ENCODE measurements at regions of chr7 and their contacts with region 1.

Region 1: DNA sequence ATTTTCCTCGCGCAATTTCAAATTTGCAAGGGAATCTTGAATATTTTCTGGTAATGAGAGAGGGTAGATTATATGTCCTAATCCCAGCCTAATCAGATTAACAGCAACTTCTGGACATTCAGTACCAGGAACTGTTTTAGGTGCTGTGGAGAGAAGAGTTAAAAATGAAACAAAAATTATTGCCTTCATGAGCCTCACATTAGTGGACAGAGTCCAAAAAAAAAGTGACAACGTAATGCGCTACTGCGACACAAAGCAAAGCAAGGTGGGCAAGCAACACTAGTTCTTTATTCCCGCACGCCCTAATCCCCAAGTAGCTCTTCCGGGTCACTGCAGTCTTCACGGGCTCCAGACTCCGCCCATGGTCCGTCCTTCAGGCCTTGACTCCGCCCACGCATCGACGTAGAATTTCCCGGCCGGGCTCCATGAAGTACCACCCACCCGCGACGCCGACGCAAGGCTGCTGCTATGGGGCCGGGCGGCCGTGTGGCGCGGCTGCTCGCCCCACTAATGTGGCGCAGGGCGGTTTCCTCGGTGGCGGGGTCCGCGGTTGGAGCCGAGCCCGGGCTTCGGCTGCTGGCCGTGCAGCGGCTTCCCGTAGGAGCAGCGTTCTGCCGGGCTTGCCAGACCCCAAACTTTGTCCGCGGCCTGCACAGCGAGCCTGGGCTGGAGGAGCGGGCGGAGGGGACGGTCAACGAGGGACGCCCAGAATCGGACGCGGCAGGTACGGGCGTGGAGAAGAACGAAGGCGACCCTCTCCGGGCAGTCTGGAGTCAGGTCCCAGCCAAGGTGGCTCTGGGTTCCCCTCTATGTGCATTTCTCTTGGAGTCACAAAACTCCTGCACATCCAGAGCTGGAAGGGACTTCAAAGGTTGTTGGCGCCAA is at the start of gene MALSU1:
- DNase-seq: peak; percentile 90 to 99 (median 96)
- ATAC-seq: peak; percentile 99
- H3K4me3 ChIP-seq: peak within 1 kb of the TSS; percentile 83 to 96
- H3K4me3 Mint-ChIP-seq: peak within 1 kb of the TSS; percentile 80
- H3K27ac ChIP-seq: peak within 1 kb of the TSS; percentile 72 to 80
- H3K27ac Mint-ChIP-seq: peak within 1 kb of the TSS; percentile 95
- H3K4me1 ChIP-seq: peaks cover 22% of the 10 kb centered on the region
- H3K4me1 Mint-ChIP-seq: peaks cover 45% of the 10 kb centered on the region
- H3K27me3 ChIP-seq: no peaks in the 10 kb centered on the region
- H3K27me3 Mint-ChIP-seq: no peaks in the 10 kb centered on the region
- CTCF ChIP-seq: no peak
- total RNA-seq, gene MALSU1: 56.0 to 56.6 TPM

Region 2: DNA sequence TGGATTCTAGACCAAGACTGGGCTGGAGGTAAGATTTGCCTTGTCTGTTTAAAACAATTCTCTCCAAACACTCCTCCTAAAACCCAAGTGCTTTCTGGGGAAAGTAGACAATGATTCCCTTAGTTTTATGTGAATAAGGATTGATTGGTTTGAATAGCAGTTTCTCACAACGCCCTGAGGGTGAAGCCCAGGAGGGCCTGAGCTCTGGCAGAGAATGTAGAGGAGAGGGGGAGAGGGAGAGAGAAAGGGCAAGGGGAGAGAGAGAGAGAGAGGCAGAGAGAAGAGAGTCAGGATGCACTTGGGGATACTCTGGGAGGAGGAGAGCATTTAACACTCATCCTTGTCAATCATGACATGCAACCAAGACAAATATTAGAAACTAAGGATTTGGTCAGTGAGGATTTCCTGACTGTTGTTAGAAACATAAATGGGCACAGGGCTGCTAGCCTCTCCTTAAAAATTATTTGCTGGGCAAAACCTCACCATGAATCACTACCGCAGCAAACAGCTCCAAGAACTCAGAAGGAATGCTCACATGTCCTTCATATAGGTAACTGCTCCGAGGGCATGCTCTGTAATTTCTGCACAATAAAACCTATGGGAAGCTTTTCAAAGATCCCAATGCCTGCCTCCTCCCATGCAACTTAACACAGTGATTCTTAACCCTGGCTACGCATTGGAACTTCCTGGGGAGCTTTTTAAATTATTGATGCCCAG is 887.0 kb before region 1 on chr7:
- CTCF ChIA-PET with region 1: no interaction called
- POLR2A ChIA-PET with region 1: no interaction called
- intact Hi-C with region 1: no loop called
- DNase-seq: no peak
- ATAC-seq: no peak
- H3K4me3 ChIP-seq: no peak overlapping the region
- H3K4me3 Mint-ChIP-seq: no peak overlapping the region
- H3K27ac ChIP-seq: no peak overlapping the region
- H3K27ac Mint-ChIP-seq: no peak overlapping the region
- H3K4me1 ChIP-seq: no peaks in the 10 kb centered on the region
- H3K4me1 Mint-ChIP-seq: no peaks in the 10 kb centered on the region
- H3K27me3 ChIP-seq: no peaks in the 10 kb centered on the region
- H3K27me3 Mint-ChIP-seq: no peaks in the 10 kb centered on the region
- CTCF ChIP-seq: no peak

Region 3: GRCh38 chr7:22854158-22855048 is 444.7 kb before region 1 on chr7:
- CTCF ChIA-PET with region 1: no interaction called
- POLR2A ChIA-PET with region 1: no interaction called
- intact Hi-C with region 1: loop called in 1 of 2 experiments (anchors 1 kb)
- DNase-seq: peak in 8 of 9 experiments; percentile 58 to 89 (median 76)
- ATAC-seq: peak; percentile 79
- H3K4me3 ChIP-seq: peak overlapping the region; percentile 82 to 94
- H3K4me3 Mint-ChIP-seq: peak overlapping the region; percentile 93
- H3K27ac ChIP-seq: peak overlapping the region; percentile 64 to 81
- H3K27ac Mint-ChIP-seq: peak overlapping the region; percentile 93
- H3K4me1 ChIP-seq: peaks cover 11% of the 10 kb centered on the region
- H3K4me1 Mint-ChIP-seq: peaks cover 23% of the 10 kb centered on the region
- H3K27me3 ChIP-seq: no peaks in the 10 kb centered on the region
- H3K27me3 Mint-ChIP-seq: no peaks in the 10 kb centered on the region
- CTCF ChIP-seq: peak; percentile 65

Region 4: GRCh38 chr7:23181684-23182553 is 117.2 kb before region 1 on chr7 and contains the start of gene NUP42:
- CTCF ChIA-PET with region 1: no interaction called
- POLR2A ChIA-PET with region 1: no interaction called
- intact Hi-C with region 1: loop called (anchors 1 kb)
- DNase-seq: peak; percentile 89 to 98 (median 95)
- ATAC-seq: peak; percentile 90
- H3K4me3 ChIP-seq: peak within 1 kb of the TSS; percentile 77 to 84
- H3K4me3 Mint-ChIP-seq: peak within 1 kb of the TSS; percentile 100
- H3K27ac ChIP-seq: peak within 1 kb of the TSS; percentile 86 to 91
- H3K27ac Mint-ChIP-seq: peak within 1 kb of the TSS; percentile 100
- H3K4me1 ChIP-seq: peaks cover 30% of the 10 kb centered on the region
- H3K4me1 Mint-ChIP-seq: peaks cover 39% of the 10 kb centered on the region
- H3K27me3 ChIP-seq: no peaks in the 10 kb centered on the region
- H3K27me3 Mint-ChIP-seq: no peaks in the 10 kb centered on the region
- CTCF ChIP-seq: no peak
- total RNA-seq, gene NUP42: 17.3 to 20.4 TPM

Region 5: GRCh38 chr7:23234569-23235296 is 64.4 kb before region 1 on chr7:
- CTCF ChIA-PET with region 1: no interaction called
- POLR2A ChIA-PET with region 1: no interaction called
- intact Hi-C with region 1: no loop called
- DNase-seq: peak in 1 of 9 experiments; percentile 12
- ATAC-seq: no peak
- H3K4me3 ChIP-seq: no peak overlapping the region
- H3K4me3 Mint-ChIP-seq: peak overlapping the region; percentile 19
- H3K27ac ChIP-seq: no peak overlapping the region
- H3K27ac Mint-ChIP-seq: no peak overlapping the region
- H3K4me1 ChIP-seq: no peaks in the 10 kb centered on the region
- H3K4me1 Mint-ChIP-seq: peaks cover 3% of the 10 kb centered on the region
- H3K27me3 ChIP-seq: no peaks in the 10 kb centered on the region
- H3K27me3 Mint-ChIP-seq: no peaks in the 10 kb centered on the region
- CTCF ChIP-seq: no peak

Region 6: GRCh38 chr7:23490357-23491135 is 191.4 kb after region 1 on chr7:
- CTCF ChIA-PET with region 1: no interaction called
- POLR2A ChIA-PET with region 1: interaction called, 5 read pairs
- intact Hi-C with region 1: loop called in 1 of 2 experiments (anchors 5 kb)
- DNase-seq: peak; percentile 32 to 81 (median 62)
- ATAC-seq: peak; percentile 93
- H3K4me3 ChIP-seq: peak overlapping the region; percentile 66 to 67
- H3K4me3 Mint-ChIP-seq: peak overlapping the region; percentile 80
- H3K27ac ChIP-seq: peak overlapping the region; percentile 35 to 70
- H3K27ac Mint-ChIP-seq: peak overlapping the region; percentile 82
- H3K4me1 ChIP-seq: peaks cover 12% of the 10 kb centered on the region
- H3K4me1 Mint-ChIP-seq: peaks cover 3% of the 10 kb centered on the region
- H3K27me3 ChIP-seq: no peaks in the 10 kb centered on the region
- H3K27me3 Mint-ChIP-seq: no peaks in the 10 kb centered on the region
- CTCF ChIP-seq: no peak

Region 7: GRCh38 chr7:23679898-23680413 is 380.8 kb after region 1 on chr7 and contains the start of gene FAM221A:
- CTCF ChIA-PET with region 1: no interaction called
- POLR2A ChIA-PET with region 1: no interaction called
- intact Hi-C with region 1: loop called in 1 of 2 experiments (anchors 2 kb)
- DNase-seq: peak; percentile 55 to 90 (median 80)
- ATAC-seq: peak; percentile 97
- H3K4me3 ChIP-seq: peak within 1 kb of the TSS; percentile 49 to 71
- H3K4me3 Mint-ChIP-seq: peak within 1 kb of the TSS; percentile 96
- H3K27ac ChIP-seq: peak within 1 kb of the TSS; percentile 3 to 18
- H3K27ac Mint-ChIP-seq: peak within 1 kb of the TSS; percentile 79
- H3K4me1 ChIP-seq: peaks cover 3% of the 10 kb centered on the region
- H3K4me1 Mint-ChIP-seq: peaks cover 18% of the 10 kb centered on the region
- H3K27me3 ChIP-seq: no peaks in the 10 kb centered on the region
- H3K27me3 Mint-ChIP-seq: no peaks in the 10 kb centered on the region
- CTCF ChIP-seq: peak; percentile 73
- total RNA-seq, gene FAM221A: 2.4 to 3.0 TPM